HEK293 (cell line): ENCODE measurements at regions of chr2 and their contacts with region 1.

Region 1: GRCh38 chr2:64383016-64383591 is 70.9 kb upstream of the LGALSL start:
- H3K4me3 ChIP-seq: no peak overlapping the region
- H3K27ac ChIP-seq: no peak overlapping the region
- H3K4me1 ChIP-seq: no peaks in the 10 kb centered on the region
- CTCF ChIP-seq: no peak

Region 2: GRCh38 chr2:64062829-64063228 is 320.3 kb before region 1 on chr2:
- CTCF ChIA-PET with region 1: no interaction called
- POLR2A ChIA-PET with region 1: interaction called, 10 read pairs
- H3K4me3 ChIP-seq: no peak overlapping the region
- H3K27ac ChIP-seq: no peak overlapping the region
- H3K4me1 ChIP-seq: no peaks in the 10 kb centered on the region
- CTCF ChIP-seq: no peak